ENCODE measurements at regions of chr1 and their contacts with region 1.

Region 1: GRCh38 chr1:175857756-175858155 is 114.4 kb upstream of the TNR start:
- DNase-seq: no peak
- ATAC-seq: no peak
- H3K4me3 ChIP-seq: no peak overlapping the region
- H3K27ac ChIP-seq: no peak overlapping the region
- H3K4me1 ChIP-seq: no peaks in the 10 kb centered on the region
- H3K27me3 ChIP-seq: peaks cover 15% of the 10 kb centered on the region
- CTCF ChIP-seq: no peak

Region 2: GRCh38 chr1:175422156-175422555 is 435.6 kb before region 1 on chr1:
- CTCF ChIA-PET with region 1: no interaction called
- POLR2A ChIA-PET with region 1: no interaction called
- in situ Hi-C with region 1: no loop called
- intact Hi-C with region 1: no loop called
- DNase-seq: no peak
- ATAC-seq: no peak
- H3K4me3 ChIP-seq: no peak overlapping the region
- H3K27ac ChIP-seq: no peak overlapping the region
- H3K4me1 ChIP-seq: no peaks in the 10 kb centered on the region
- H3K27me3 ChIP-seq: no peaks in the 10 kb centered on the region
- CTCF ChIP-seq: no peak

Region 3: GRCh38 chr1:176066709-176067108 is 209.0 kb after region 1 on chr1:
- CTCF ChIA-PET with region 1: no interaction called
- POLR2A ChIA-PET with region 1: interaction called, 21 read pairs
- in situ Hi-C with region 1: no loop called
- intact Hi-C with region 1: no loop called
- DNase-seq: no peak
- ATAC-seq: no peak
- H3K4me3 ChIP-seq: no peak overlapping the region
- H3K27ac ChIP-seq: no peak overlapping the region
- H3K4me1 ChIP-seq: no peaks in the 10 kb centered on the region
- H3K27me3 ChIP-seq: no peaks in the 10 kb centered on the region
- CTCF ChIP-seq: no peak